Activated CD4-positive, alpha-beta T cell treated with anti-CD3 and anti-CD28 coated beads, Interleukin-2, amount 10 ng/mL, durations not matched to agents 24 days and 14 days (primary cell): ENCODE measurements at regions of chr7 and their contacts with region 1.

Region 1: GRCh38 chr7:27160546-27161213 is 4.2 kb upstream of the HOXA7 start:
- DNase-seq: peak; percentile 93
- H3K4me3 Mint-ChIP-seq: peak overlapping the region; percentile 72
- H3K27ac Mint-ChIP-seq: no peak overlapping the region
- H3K4me1 Mint-ChIP-seq: peaks cover 4% of the 10 kb centered on the region
- H3K27me3 Mint-ChIP-seq: peaks cover 74% of the 10 kb centered on the region

Region 2: GRCh38 chr7:26376175-26376917 is 784.3 kb before region 1 on chr7:
- intact Hi-C with region 1: loop called (anchors 1 kb)
- DNase-seq: peak; percentile 84
- H3K4me3 Mint-ChIP-seq: peak overlapping the region; percentile 84
- H3K27ac Mint-ChIP-seq: peak overlapping the region; percentile 88
- H3K4me1 Mint-ChIP-seq: peaks cover 5% of the 10 kb centered on the region
- H3K27me3 Mint-ChIP-seq: peaks cover 38% of the 10 kb centered on the region

Region 3: GRCh38 chr7:26853788-26854393 is 306.8 kb before region 1 on chr7:
- intact Hi-C with region 1: loop called (anchors 1 kb)
- DNase-seq: no peak
- H3K4me3 Mint-ChIP-seq: no peak overlapping the region
- H3K27ac Mint-ChIP-seq: no peak overlapping the region
- H3K4me1 Mint-ChIP-seq: peaks cover 4% of the 10 kb centered on the region
- H3K27me3 Mint-ChIP-seq: peaks cover 34% of the 10 kb centered on the region

Region 4: GRCh38 chr7:27172823-27173510 is 12.3 kb after region 1 on chr7:
- intact Hi-C with region 1: loop called (anchors 2 kb)
- DNase-seq: no peak
- H3K4me3 Mint-ChIP-seq: no peak overlapping the region
- H3K27ac Mint-ChIP-seq: no peak overlapping the region
- H3K4me1 Mint-ChIP-seq: peaks cover 5% of the 10 kb centered on the region
- H3K27me3 Mint-ChIP-seq: peaks cover 60% of the 10 kb centered on the region